ENCODE measurements at regions of chr3 and their contacts with region 1.

Region 1: DNA sequence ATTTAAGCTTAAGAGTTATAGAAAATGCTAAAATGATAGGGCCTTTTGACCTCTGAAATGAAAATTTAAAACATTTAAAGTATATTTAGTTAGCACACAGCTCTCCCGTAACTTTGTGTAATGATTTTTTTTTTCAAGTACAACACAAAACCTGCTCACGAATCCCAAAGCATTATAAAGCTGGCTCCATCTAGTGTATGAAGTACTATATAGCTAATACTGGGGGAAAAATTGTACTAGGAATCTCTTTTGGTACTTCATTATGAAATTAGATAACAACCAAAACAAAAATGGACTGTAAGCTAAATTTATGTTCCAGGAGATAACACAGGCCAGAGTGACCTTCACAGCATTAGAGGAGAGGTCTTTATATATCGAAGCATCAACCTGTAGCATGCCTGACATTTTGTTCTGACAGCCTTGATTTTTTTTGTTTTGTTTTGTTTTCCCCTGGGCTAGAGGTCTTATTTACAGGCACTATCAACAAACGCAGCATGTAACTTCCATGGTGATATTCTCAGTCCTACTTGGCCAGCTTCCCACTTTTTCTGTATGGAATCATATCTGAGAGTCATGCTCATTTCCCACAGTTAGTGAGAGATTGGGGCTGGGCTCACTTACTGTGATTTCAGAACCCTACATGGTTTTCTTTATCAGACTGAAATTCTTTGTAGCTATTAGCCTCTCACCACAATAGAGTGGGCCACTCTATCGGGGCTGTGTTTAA is 116.3 kb downstream of the MITF start:
- DNase-seq: no peak

Region 2: DNA sequence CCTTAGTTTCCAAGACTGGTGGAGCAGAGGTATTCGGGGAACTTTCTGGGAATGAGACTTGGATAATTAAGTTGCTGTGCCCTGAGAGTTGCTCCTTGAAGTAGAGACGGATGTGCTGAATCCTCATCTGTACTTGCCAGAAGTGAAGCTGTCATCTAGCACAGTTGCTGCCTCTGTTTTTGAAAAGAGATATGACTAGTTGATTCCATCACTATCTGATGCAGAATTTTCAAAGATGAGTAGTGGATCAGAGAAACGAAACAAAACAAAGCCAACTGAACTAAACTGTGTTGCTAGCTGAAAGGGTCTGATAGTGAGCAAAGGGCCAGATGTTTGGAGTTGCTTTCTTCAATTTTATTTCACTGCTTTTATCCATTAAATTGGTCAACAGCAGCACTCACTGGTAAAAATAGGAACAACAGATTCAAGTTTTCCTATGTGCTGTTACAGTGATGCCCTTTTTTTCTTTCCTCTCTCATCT is 63.6 kb before region 1 on chr3:
- intact Hi-C with region 1: loop called (anchors 5 kb)
- DNase-seq: no peak

Measured in posterior cingulate gyrus (tissue), 11 donors.